Thyroid gland (tissue), 4 donors: ENCODE measurements at regions of chr2 and their contacts with region 1.

Region 1: DNA sequence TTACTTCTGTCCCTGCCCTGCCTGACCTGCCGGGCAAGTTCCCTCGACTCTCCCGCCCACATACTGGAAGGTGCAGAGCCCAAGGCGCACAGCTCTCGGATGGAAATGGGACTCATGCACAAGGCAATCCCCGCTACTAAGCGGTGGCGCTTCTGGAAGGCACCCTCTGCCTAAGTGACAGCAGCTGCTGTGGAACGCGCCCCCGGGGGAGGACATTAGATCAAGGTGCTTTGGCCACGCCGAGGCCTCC is 241 bp downstream of the MCEE start:
- DNase-seq: no peak
- H3K4me3 ChIP-seq: peak overlapping the region; percentile 63 to 96 (median 85)
- H3K27ac ChIP-seq: peak overlapping the region; percentile 92 to 97 (median 94)
- H3K4me1 ChIP-seq: peaks cover 12 to 17% of the 10 kb centered on the region in 2 donors
- H3K27me3 ChIP-seq: no peaks in the 10 kb centered on the region
- CTCF ChIP-seq: no peak
- POLR2A ChIP-seq: no peak

Region 2: DNA sequence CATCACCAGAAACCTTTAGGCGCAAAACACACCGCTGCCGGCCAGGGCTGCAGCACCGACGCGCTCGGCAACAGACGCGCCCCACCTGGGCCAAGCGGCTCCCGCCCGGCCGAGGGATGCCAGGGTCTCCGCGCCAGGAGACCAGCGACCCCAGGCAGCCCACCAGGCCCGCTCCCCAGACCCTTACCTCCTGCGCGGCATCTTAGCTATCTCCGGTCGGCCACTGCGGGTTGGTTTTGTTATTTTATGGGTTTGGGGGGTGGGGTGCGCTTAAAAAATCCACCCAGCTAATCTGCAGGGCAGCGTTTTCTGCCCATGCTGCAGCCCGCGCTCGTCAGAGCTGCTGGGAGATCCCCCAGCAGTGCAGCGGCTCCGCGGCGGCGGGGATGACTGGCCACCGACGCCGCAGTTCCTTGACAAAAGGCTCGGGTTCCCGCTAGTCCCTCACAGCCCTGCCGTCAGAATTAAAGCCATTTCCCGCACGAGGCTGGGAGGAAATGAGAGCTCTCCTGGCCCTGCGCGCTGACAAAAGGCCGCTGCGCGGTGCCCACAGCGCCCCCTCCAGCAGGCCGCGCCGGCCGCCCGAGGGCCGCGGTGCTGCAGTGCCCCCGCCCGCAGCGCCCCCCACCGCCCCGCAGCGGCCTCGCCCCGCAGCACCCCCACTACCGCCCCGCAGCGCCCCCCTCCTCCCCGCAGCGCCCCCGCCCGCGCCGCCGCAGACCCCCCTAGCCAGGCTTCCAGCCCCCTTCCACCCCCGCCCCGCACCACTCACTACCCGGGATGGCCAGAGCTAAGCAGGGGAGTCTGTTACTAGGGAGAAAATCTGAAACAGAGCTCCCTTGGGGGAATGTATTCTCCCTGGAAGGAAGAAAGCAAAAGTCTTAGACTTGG is 361.8 kb before region 1 on chr2 and contains the start of gene ADD2:
- intact Hi-C with region 1: no loop called
- DNase-seq: peak; percentile 26 to 29
- H3K4me3 ChIP-seq: peak within 1 kb of the TSS in 2 of 3 donors; percentile 32 to 43
- H3K27ac ChIP-seq: no peak within 1 kb of the TSS
- H3K4me1 ChIP-seq: peaks cover 9 to 11% of the 10 kb centered on the region in 2 donors
- H3K27me3 ChIP-seq: no peaks in the 10 kb centered on the region
- CTCF ChIP-seq: peak in 2 of 6 experiments; percentile 13 to 42
- POLR2A ChIP-seq: peak in 1 of 2 donors; percentile 25
- total RNA-seq, gene ADD2: 1.9 to 6.5 (median 3.1) TPM

Region 3: GRCh38 chr2:71071667-71072398 is 58.0 kb before region 1 on chr2:
- intact Hi-C with region 1: loop called (anchors 10 kb)
- DNase-seq: no peak
- H3K4me3 ChIP-seq: no peak overlapping the region
- H3K27ac ChIP-seq: no peak overlapping the region
- H3K4me1 ChIP-seq: peaks cover 21 to 24% of the 10 kb centered on the region in 2 donors
- H3K27me3 ChIP-seq: no peaks in the 10 kb centered on the region
- CTCF ChIP-seq: no peak
- POLR2A ChIP-seq: no peak